ENCODE measurements at regions of chr6 and their contacts with region 1.

Region 1: GRCh38 chr6:143427109-143427817 is 23.2 kb downstream of the ADAT2 start:
- DNase-seq: peak; percentile 79
- ATAC-seq: peak; percentile 98
- H3K4me3 Mint-ChIP-seq: no peak overlapping the region
- H3K27ac Mint-ChIP-seq: no peak overlapping the region
- H3K4me1 Mint-ChIP-seq: no peaks in the 10 kb centered on the region
- H3K27me3 Mint-ChIP-seq: no peaks in the 10 kb centered on the region

Region 2: DNA sequence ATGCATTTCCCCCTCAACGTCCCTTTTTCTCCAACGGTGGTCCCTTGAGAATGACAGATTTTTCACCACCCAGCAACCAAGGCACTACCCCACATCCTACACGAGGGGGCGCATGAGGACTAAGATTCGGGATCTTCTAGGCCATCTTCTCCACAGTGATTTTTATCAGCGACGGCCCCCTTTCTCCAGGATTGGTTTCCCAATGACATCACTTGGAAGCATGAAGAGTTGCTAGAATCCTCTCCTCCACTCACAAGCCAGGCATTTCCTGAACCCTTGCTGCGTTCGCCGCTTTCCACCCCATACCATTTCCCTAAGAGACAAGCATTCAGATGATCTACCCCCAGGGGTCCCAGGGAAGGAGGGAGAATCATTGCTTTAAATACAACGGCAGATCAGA is 734.3 kb before region 1 on chr6:
- CTCF ChIA-PET with region 1: interaction called, 32 read pairs
- POLR2A ChIA-PET with region 1: no interaction called
- DNase-seq: peak; percentile 74
- ATAC-seq: peak; percentile 82
- H3K4me3 Mint-ChIP-seq: no peak overlapping the region
- H3K27ac Mint-ChIP-seq: no peak overlapping the region
- H3K4me1 Mint-ChIP-seq: peaks cover 12% of the 10 kb centered on the region
- H3K27me3 Mint-ChIP-seq: no peaks in the 10 kb centered on the region

Region 3: GRCh38 chr6:143232849-143233248 is 194.4 kb before region 1 on chr6:
- CTCF ChIA-PET with region 1: interaction called, 17 read pairs
- POLR2A ChIA-PET with region 1: no interaction called
- DNase-seq: peak; percentile 30
- ATAC-seq: no peak
- H3K4me3 Mint-ChIP-seq: no peak overlapping the region
- H3K27ac Mint-ChIP-seq: no peak overlapping the region
- H3K4me1 Mint-ChIP-seq: no peaks in the 10 kb centered on the region
- H3K27me3 Mint-ChIP-seq: no peaks in the 10 kb centered on the region

Region 4: DNA sequence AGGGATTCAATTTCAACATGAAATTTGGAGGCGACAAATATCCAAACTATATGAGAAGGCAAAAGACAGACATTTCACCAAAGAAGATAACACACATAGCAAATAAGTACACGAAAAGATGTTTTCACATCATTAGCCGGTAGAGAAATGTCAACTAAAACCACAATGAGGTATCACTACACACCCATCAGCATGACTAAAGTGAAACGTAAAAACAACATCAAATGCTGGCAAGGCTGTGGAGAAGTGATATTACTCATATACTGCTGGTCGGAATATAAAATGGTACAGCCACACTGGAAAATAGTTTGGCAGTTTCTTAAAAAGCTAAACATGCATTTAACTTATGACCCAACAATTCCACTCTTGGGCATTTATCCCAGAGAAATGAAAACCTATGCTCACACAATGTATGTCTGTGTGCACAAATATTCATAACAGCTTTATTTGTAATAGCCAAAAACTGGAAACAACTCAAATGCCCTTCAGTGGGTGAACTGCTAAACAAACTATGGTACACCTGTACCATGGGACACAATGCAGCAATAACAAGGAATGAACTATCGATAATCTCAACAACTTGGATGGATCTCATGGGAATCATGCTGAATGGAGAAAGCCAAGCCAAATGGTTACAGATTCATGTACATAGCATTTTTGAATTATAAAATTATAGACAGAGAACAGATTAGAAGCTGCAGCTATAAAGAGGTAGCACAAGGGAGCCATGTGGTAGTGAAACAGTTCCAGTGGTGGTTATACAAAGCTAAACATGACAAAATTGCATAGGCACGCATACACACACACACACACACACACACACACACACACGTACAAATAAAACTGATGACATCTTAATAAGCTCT is 14.7 kb after region 1 on chr6:
- CTCF ChIA-PET with region 1: interaction called, 10 read pairs
- POLR2A ChIA-PET with region 1: no interaction called
- DNase-seq: no peak
- ATAC-seq: peak; percentile 74
- H3K4me3 Mint-ChIP-seq: no peak overlapping the region
- H3K27ac Mint-ChIP-seq: peak overlapping the region; percentile 43
- H3K4me1 Mint-ChIP-seq: peaks cover 18% of the 10 kb centered on the region
- H3K27me3 Mint-ChIP-seq: no peaks in the 10 kb centered on the region

Region 5: GRCh38 chr6:143465546-143465945 is 38.3 kb after region 1 on chr6:
- CTCF ChIA-PET with region 1: no interaction called
- POLR2A ChIA-PET with region 1: no interaction called
- DNase-seq: no peak
- ATAC-seq: no peak
- H3K4me3 Mint-ChIP-seq: no peak overlapping the region
- H3K27ac Mint-ChIP-seq: no peak overlapping the region
- H3K4me1 Mint-ChIP-seq: no peaks in the 10 kb centered on the region
- H3K27me3 Mint-ChIP-seq: no peaks in the 10 kb centered on the region

Measured in activated CD8-positive, alpha-beta T cell treated with anti-CD3 and anti-CD28 coated beads, Interleukin-2, amount 10 ng/mL, durations not matched to agents 7 days and 5 days (primary cell).